ENCODE measurements at regions of chr21 and their contacts with region 1.

Region 1: DNA sequence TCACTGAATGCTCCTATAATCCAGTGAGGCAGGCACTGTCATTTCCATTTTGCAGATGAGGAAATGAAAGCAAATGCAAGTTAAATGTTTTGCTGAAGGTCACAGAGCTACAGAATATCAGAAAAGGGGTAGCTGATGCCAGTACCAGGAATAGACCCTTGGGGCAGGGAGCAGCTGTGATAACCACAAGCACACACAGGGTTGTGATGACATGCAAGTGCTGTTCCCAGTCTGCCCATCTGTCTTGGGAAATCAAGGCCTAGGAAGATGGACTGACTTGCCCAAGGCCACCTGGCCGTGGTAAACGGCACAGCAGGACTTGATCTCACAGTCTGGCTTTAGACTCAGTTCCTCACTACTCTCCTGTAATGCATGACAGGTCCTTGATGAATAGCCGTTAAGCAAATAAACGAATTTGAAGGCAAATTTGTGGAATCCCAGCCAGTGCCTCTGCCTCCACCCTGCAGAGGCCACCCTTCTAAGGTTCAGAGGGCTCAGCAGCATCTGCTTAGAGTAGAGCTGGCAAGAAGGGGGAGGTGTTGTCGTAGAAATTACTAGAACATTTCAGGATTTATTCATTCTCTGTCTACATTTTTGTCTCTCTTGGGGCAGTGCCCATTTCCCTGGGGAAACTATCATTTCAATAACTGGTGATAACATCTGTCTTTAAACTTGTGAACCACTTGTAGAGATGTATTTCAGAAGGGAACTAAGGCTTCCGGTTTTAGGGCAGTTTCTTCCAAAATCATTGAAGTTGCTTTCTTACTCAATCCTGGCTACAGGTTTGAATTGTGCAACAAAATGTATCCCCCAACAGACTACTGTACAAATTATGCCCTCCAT is 53.2 kb upstream of the MRPS6 start:
- DNase-seq: peak; percentile 95
- H3K4me3 ChIP-seq: peak overlapping the region; percentile 42
- H3K27ac ChIP-seq: peak overlapping the region; percentile 98
- H3K4me1 ChIP-seq: peaks cover 69% of the 10 kb centered on the region
- CTCF ChIP-seq: peak; percentile 68

Region 2: DNA sequence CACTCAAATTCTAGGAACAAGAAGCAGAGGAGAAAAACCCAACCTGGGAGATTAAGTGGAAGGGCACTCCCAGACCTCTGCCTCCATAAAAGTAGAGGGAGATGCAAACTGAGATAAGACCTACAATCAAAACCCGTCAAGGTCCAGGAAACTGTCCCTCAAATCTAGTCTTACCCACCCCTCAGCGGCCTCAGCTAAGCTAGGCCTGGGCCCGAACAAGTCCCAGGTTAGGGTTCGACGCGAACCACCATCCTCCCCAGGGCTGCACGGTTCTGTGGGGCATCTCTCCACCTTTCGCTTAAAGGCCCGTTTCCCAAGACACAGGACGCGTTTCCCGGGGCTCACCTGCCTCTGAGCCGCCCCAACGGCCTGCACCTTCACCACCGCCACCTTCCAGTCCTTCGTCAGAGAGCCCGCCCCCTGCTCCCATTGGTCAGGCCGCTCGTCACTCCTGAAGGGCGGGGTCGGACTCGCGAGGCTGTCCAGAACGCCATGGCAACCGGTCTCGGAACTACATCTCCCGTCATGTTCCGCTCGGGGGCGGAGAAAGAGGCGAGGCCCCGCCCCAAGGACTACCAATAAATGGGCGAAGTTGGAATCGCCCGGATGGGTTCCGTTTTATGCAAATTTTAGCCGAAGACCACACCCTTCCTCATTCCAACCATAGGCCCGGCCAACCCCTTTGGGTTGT is 378.7 kb before region 1 on chr21 and contains the start of gene CRYZL1:
- CTCF ChIA-PET with region 1: no interaction called
- POLR2A ChIA-PET with region 1: no interaction called
- intact Hi-C with region 1: loop called (anchors 5 kb)
- DNase-seq: peak; percentile 100
- H3K4me3 ChIP-seq: peak within 1 kb of the TSS; percentile 83
- H3K27ac ChIP-seq: peak within 1 kb of the TSS; percentile 55
- H3K4me1 ChIP-seq: peaks cover 15% of the 10 kb centered on the region
- CTCF ChIP-seq: no peak
- total RNA-seq, gene CRYZL1: 19.8 and 26.4 TPM in 2 replicates

Region 3: DNA sequence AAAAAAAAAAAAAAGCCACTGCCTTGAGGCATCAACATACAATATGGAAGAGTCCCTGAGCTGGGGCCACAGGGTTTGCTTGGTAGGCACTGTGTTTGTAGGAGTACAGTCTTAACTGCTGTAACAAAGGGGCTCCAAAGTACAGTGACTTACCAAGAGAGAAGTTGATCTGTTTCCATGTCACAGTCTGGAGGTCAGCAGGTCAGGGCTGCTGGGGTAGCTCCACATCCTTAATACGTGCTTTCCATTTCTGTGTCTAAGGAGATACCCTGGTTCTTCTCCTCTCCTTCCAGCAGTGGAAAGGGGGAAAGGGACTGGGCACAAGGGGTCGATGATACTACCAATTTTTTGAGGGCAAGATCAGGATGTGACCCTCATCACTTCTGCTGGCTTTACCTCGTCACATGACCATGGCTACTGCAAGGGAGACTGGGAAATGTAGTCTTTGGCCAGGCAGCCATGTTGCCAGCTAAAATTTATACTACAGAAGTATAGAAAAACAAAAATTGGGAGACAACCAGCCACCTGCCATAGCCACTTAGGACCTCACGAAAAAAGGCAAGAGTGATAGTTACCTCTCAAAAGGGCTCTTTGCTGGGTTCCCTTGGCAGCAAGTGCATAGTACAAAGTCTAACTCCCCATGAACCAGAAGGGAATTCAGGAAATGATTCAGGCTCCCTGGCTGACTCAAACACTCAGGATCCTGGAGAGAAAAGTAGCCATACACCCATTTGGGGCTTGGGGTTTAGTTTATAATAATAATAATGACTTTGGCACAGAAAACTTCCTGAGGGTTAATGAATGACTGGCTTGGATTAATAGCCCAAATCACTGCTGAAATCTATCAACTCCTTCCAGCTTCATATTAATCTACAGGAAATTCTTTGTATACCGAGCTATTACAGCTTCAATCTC is 51.9 kb before region 1 on chr21:
- CTCF ChIA-PET with region 1: no interaction called
- POLR2A ChIA-PET with region 1: interaction called, 5 read pairs
- intact Hi-C with region 1: loop called (anchors 2 kb)
- DNase-seq: peak; percentile 80
- H3K4me3 ChIP-seq: peak overlapping the region; percentile 62
- H3K27ac ChIP-seq: peak overlapping the region; percentile 2
- H3K4me1 ChIP-seq: peaks cover 11% of the 10 kb centered on the region
- CTCF ChIP-seq: no peak

Region 4: DNA sequence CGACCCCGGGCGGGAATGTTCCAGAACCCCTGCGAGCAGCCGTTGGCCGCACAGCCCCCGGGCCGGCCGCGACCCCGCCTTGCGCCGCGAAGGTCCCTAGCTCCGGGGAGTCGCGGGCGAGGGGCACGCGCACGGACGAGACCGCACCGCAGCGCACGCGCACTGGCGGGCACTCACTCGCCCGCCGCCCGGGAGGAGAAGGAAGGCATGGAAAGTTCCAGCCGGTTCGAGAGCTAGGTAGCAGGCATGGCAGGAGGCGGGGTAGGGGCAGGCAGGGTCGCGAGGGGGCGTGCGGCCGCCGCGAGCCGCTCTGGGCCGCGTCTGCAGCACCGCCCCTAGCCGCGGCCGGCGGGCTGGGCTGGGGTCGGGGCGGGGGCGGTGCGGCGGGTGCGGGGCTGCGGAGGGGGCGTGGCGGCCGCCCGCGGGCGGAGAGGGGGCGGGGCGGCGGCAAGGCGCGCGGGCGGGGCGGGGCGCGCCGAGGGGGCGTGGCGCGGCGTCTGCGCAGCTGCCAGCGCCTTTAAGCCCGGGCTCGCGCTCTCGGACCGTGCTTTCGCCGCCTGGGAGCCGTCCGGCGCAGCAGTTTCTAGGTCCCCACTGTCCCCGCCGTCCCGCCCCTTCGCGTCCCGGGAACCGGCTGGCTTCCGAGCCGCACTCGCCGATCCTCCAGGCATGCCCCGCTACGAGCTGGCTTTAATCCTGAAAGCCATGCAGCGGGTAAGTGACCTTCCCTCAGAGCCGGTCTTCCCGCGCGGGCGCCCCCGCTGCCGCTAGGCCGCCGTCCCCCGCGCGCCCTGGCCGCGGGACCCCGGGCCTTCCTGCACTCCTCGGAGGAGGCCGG is 53.0 kb after region 1 on chr21 and contains the starts of genes MRPS6 and SLC5A3:
- CTCF ChIA-PET with region 1: interaction called, 3 read pairs
- POLR2A ChIA-PET with region 1: no interaction called
- intact Hi-C with region 1: loop called (anchors 2 kb)
- DNase-seq: peak; percentile 90
- H3K4me3 ChIP-seq: peak within 1 kb of the TSS; percentile 90
- H3K27ac ChIP-seq: peak within 1 kb of the TSS; percentile 43
- H3K4me1 ChIP-seq: peaks cover 41% of the 10 kb centered on the region
- CTCF ChIP-seq: no peak
- total RNA-seq, gene MRPS6: 15.2 and 20.9 TPM in 2 replicates
- total RNA-seq, gene SLC5A3: 26.3 and 31.5 TPM in 2 replicates

Region 5: DNA sequence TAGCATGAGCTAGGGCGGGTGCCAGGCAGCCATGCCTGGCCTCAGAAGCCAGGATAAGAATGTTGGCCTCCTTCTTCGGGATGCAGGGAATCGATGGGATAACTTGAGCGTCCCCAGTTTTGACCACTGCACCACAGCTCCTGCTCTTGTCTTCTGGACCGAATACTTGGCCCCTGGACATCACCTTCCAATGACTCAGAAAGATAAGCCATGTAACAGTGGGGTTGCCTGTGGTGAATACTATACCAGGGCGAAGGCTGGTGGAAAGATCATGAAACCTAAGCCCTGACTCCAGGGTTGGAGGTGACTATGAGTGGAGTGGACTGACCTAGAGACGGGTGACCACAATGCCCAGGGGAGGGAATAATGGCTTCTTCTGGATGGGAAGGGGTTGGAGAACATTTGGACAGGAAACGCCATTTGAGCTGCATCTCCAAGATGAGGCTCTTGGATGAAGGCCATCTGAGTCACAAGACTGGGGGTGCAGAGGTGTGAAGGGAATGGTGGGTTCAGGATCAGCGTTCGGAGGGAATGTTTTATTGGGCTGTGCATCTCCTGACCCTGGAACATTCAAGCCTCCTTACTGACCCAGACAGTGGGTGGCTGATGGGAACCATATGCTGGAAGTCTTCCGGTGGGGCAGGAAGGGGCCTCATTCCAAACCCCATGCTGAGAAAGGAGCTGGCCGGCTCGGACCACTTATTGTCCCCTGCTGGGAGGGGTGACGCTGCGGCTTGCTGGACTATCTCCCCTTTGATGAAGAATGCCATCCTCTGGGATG is 325.1 kb after region 1 on chr21:
- CTCF ChIA-PET with region 1: no interaction called
- POLR2A ChIA-PET with region 1: no interaction called
- intact Hi-C with region 1: loop called (anchors 5 kb)
- DNase-seq: no peak
- H3K4me3 ChIP-seq: no peak overlapping the region
- H3K27ac ChIP-seq: no peak overlapping the region
- H3K4me1 ChIP-seq: no peaks in the 10 kb centered on the region
- CTCF ChIP-seq: no peak